Activated naive CD4-positive, alpha-beta T cell treated with anti-CD3 and anti-CD28 coated beads for 36 hours (primary cell): ENCODE measurements at regions of chr1 and their contacts with region 1.

Region 1: DNA sequence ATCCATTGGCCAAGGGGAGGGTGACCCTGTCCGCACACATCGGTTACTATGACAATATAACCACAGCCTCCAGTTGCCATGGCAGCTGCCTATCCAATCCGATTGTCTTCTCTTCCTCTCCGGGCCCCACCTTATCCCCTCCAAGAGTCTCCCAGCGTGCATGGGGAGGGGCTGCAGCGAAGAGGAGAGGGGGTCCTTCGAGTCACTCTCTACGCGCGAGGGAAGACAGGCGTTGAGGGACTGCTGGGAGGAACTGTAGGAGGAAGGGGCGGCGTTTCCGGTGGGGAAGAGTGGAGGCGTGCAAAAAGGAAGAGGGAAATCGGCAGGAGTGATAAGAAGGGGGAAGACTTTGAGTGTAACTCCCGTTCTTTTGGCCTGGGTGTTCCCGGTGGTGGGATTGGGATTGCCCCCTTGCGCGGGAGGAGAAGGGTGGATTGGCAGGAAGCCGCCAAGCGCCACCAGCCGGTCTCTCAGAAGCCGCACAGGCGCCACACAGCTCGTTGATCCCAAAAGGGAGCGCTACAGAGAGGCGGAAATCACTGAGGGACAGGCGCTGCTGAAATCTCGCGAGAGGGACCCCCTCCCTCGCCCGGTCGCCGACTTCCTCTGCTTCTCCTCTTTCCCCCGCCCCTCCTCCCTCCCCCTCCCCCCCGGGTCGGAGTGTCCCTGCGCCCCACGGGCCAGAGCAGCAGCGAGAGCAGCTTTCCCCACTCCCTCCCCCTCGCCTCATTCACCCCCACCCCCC is 384 bp upstream of the SMG7 start:
- DNase-seq: peak; percentile 98
- H3K4me3 Mint-ChIP-seq: peak overlapping the region; percentile 81
- H3K27ac Mint-ChIP-seq: peak overlapping the region; percentile 99
- H3K4me1 Mint-ChIP-seq: peaks cover 24% of the 10 kb centered on the region
- H3K27me3 Mint-ChIP-seq: no peaks in the 10 kb centered on the region

Region 2: DNA sequence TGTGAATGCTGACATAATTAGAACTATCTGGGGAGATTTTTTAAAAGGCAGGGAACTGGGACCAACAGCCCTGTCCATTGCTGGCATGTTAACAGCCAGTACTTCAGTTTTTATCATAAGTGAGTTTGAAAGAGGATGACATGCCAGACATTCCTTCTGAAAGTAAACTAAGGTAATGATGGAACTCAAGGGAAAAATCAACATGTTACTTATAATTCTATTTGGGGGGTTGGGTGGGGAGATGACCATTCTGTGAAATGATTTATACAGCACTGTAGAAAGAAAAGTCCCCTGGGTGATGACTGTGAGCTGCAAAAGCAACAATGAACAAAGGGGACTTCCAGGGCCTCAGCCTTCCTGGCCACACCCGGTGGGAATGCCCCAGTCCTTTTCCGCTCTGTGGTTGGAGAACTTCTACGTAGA is 291.3 kb before region 1 on chr1:
- CTCF ChIA-PET with region 1: no interaction called
- intact Hi-C with region 1: loop called (anchors 5 kb)
- DNase-seq: peak; percentile 67
- H3K4me3 Mint-ChIP-seq: no peak overlapping the region
- H3K27ac Mint-ChIP-seq: no peak overlapping the region
- H3K4me1 Mint-ChIP-seq: peaks cover 11% of the 10 kb centered on the region
- H3K27me3 Mint-ChIP-seq: peaks cover 9% of the 10 kb centered on the region

Region 3: GRCh38 chr1:183368202-183369108 is 103.5 kb before region 1 on chr1:
- CTCF ChIA-PET with region 1: no interaction called
- intact Hi-C with region 1: no loop called
- DNase-seq: no peak
- H3K4me3 Mint-ChIP-seq: no peak overlapping the region
- H3K27ac Mint-ChIP-seq: no peak overlapping the region
- H3K4me1 Mint-ChIP-seq: no peaks in the 10 kb centered on the region
- H3K27me3 Mint-ChIP-seq: peaks cover 10% of the 10 kb centered on the region

Region 4: GRCh38 chr1:183444243-183444642 is 27.7 kb before region 1 on chr1:
- CTCF ChIA-PET with region 1: no interaction called
- intact Hi-C with region 1: no loop called
- DNase-seq: no peak
- H3K4me3 Mint-ChIP-seq: no peak overlapping the region
- H3K27ac Mint-ChIP-seq: no peak overlapping the region
- H3K4me1 Mint-ChIP-seq: no peaks in the 10 kb centered on the region
- H3K27me3 Mint-ChIP-seq: no peaks in the 10 kb centered on the region

Region 5: DNA sequence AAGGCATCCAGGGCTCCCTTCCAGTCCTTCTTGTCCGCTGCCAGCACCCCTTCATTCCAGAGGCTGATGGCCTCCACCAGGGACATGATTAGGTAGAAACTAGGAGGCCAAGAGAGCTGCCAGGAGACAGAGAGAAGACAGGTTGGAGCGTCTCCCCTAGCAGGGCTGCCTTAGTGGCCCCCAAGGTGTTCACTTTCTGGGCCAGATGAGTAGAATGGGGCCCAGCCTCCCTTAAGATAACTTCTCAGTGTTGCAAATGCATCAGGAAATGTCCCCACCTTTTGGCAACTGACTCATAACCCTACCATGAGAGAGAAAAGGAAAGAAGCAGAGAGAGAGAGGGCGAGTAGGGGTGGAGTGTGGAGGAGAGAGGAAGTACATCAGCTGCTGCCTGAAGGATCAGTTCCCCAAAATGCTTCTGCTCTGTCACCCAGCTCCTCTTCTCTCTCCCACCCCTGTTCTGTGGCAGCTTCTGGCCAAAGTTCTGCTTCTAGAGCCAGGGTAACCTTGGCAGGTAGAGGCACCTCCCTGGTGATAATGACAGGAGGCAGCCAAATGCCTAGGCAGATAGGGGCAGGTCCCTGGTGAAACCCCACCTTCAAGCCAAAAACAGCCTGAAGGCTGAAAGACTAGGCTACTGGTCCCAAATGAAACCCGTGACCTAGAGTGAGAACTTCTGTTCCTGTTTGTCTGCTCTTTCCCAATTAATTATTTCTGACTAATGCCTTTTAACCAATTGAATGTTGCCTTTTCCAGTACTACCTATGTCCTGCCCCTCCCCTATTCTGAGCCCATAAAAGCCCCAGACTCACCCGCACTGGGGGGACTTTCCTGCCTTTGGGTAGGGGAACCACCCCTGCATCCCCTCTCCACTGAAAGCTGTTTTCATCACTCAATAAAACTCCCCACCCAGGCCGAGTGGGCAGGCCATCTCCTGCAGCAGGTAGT is 118.6 kb after region 1 on chr1 and contains the start of gene NCF2:
- CTCF ChIA-PET with region 1: interaction called, 6 read pairs
- intact Hi-C with region 1: loop called (anchors 1 kb)
- DNase-seq: peak; percentile 80
- H3K4me3 Mint-ChIP-seq: peak within 1 kb of the TSS; percentile 49
- H3K27ac Mint-ChIP-seq: peak within 1 kb of the TSS; percentile 93
- H3K4me1 Mint-ChIP-seq: peaks cover 42% of the 10 kb centered on the region
- H3K27me3 Mint-ChIP-seq: no peaks in the 10 kb centered on the region
- total RNA-seq, gene NCF2: 14.0 to 14.3 TPM

Region 6: DNA sequence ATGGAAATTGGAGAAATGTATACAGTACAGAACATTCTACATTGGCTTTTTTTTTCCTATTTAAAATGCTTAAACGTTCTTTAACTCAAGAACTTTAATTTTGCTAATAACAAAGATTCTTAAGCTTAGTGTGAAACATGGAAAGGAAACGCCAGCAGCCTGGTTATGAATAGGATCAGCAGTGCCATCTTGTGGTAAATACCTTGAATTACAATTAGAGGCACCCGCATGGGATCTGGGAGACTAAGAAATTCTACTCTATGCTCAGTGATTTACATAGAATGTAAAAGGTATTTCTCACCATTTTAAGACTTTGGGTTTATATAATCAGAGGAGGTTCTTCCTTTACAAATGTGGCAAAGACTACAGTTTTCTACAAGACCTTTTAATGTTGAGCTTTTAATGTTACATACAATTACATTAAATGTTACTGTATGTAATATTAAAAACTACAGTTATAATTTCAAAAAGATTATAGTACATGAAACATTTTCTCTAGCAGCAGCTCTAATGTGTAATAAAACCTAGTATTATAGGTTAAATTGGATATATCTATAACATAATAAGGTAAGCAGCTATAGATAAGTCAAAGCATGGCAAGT is 213.3 kb after region 1 on chr1:
- CTCF ChIA-PET with region 1: interaction called, 6 read pairs
- intact Hi-C with region 1: loop called (anchors 1 kb)
- DNase-seq: peak; percentile 41
- H3K4me3 Mint-ChIP-seq: no peak overlapping the region
- H3K27ac Mint-ChIP-seq: no peak overlapping the region
- H3K4me1 Mint-ChIP-seq: peaks cover 8% of the 10 kb centered on the region
- H3K27me3 Mint-ChIP-seq: no peaks in the 10 kb centered on the region

Region 7: DNA sequence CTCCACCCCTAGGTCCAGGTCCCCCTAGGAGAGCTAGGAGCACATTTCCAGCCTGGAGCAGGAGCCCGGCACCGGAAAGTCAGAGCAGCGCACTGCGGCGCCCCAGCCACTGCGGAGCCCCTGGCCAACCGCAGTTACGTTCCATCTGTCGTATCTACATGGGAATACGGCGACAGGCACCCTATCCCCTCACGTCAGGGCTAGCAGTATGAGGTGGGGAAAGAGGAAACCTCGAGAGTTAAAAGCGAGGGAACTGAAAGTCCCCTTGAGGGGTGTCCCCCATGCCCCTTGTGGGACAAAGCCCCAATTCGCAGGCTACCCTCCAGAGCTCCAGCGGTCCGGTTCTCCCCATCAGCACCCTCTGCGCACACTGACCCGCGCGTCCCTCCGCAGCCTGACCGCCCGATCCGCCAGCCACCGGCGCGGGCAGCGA is 564.6 kb after region 1 on chr1:
- CTCF ChIA-PET with region 1: no interaction called
- intact Hi-C with region 1: loop called (anchors 2 kb)
- DNase-seq: peak; percentile 23
- H3K4me3 Mint-ChIP-seq: peak overlapping the region; percentile 58
- H3K27ac Mint-ChIP-seq: no peak overlapping the region
- H3K4me1 Mint-ChIP-seq: peaks cover 15% of the 10 kb centered on the region
- H3K27me3 Mint-ChIP-seq: peaks cover 68% of the 10 kb centered on the region

Region 8: DNA sequence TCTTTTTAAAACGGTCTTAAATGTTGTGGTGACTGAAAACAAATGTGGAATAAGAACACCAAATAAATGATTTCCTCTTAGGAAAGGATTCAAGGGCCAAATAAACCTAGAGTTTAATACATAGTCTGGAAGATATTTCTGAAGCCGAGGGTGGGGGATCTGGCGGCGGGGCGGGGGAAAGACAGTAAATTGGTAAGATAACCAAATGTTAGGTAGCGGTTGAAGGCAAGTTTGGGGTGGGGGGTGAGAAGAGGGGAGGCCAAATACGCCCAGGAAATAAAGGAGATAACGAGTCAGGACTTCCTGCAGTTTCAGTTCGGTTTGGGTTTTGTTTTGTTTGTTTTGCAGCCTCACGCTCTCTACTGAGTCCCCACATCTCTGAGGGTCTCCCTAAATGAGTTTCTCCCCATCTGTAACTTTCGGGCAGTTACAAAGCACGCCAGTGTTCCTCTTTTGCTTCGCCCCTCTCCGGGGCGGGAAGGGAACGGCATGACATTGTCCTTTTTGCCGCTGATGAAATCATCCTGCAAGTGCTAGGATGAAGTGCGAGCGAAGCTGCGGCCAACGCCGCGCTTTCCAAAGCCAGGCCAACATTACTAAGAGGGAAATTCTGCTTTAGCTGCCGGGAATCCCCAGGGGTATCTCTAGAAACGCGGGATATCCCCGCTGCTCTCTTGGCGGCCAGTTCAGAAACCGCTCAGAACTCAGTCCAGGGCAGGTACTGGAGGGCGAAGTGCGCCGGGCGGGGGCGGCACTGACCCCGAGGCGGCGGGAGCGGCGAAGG is 1501.5 kb after region 1 on chr1:
- CTCF ChIA-PET with region 1: no interaction called
- intact Hi-C with region 1: loop called (anchors 1 kb)
- DNase-seq: peak; percentile 84
- H3K4me3 Mint-ChIP-seq: peak overlapping the region; percentile 79
- H3K27ac Mint-ChIP-seq: peak overlapping the region; percentile 93
- H3K4me1 Mint-ChIP-seq: peaks cover 40% of the 10 kb centered on the region
- H3K27me3 Mint-ChIP-seq: peaks cover 25% of the 10 kb centered on the region